ENCODE measurements at regions of chr20 and their contacts with region 1.

Region 1: DNA sequence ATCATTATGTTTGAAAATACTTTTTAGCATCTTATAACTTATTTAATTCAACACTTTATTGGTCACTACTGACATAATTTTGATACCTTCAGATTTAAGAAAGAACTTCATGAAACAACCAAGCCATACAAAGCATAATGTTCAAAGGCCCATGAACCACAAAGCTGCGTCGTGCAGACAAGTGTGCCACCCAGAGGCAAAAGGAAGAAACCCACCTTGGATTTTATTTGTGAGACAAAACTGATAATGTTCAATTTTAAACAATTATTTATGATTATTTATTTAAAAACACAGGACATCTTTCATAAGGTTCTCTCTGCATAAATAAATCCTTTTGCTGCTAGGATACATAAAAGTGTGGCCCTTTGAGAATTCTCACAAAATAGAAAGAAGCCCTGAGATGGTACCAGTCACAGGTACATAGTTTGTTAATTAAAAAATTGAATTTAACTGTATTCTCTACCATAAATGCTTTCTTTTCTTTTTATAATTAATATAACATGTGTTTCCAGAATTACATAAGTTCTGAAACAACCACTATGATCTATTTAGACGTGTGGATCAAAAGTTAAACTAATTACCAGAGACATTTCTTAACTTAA is 143.7 kb downstream of the RALGAPA2 start:
- DNase-seq: peak; percentile 47 to 53
- H3K4me3 ChIP-seq: no peak overlapping the region
- H3K4me1 ChIP-seq: no peaks in the 10 kb centered on the region
- H3K27me3 ChIP-seq: no peaks in the 10 kb centered on the region

Region 2: GRCh38 chr20:19915111-19915798 is 653.5 kb before region 1 on chr20:
- in situ Hi-C with region 1: no loop called
- DNase-seq: no peak
- H3K4me3 ChIP-seq: no peak overlapping the region
- H3K4me1 ChIP-seq: no peaks in the 10 kb centered on the region
- H3K27me3 ChIP-seq: no peaks in the 10 kb centered on the region

Region 3: DNA sequence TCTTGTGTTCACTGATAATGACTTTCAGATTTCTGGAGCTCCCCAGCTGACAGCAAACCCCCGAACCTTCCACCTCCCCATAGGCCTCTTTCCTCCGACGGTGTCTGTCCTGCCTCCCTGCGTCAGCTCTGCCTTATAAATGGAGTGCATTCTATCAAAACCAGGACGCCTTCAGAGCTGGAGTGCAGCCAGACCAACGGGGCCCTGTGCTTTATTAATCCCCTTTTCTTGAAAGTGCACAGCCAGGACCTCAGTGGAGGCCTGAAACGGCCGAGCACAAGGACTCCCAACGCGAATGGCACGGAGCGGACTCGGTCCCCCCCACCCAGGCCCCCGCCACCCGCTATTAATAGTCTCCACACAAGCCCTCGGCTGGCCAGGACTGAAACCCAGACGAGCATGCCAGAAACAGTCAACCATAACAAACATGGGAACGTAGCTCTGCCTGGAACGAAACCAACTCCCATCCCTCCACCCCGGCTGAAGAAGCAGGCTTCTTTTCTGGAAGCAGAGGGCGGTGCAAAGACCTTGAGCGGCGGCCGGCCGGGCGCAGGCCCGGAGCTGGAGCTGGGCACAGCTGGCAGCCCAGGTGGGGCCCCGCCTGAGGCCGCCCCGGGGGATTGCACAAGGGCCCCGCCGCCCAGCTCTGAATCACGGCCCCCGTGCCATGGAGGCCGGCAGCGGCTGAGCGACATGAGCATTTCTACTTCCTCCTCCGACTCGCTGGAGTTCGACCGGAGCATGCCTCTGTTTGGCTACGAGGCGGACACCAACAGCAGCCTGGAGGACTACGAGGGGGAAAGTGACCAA is 593.9 kb before region 1 on chr20:
- in situ Hi-C with region 1: no loop called
- DNase-seq: no peak
- H3K4me3 ChIP-seq: no peak overlapping the region
- H3K4me1 ChIP-seq: peaks cover 11% of the 10 kb centered on the region
- H3K27me3 ChIP-seq: no peaks in the 10 kb centered on the region

Region 4: GRCh38 chr20:20096421-20096820 is 472.3 kb before region 1 on chr20:
- in situ Hi-C with region 1: loop called (anchors 10 kb)
- DNase-seq: no peak
- H3K4me3 ChIP-seq: no peak overlapping the region
- H3K4me1 ChIP-seq: no peaks in the 10 kb centered on the region
- H3K27me3 ChIP-seq: no peaks in the 10 kb centered on the region

Region 5: GRCh38 chr20:20360464-20360863 is 208.2 kb before region 1 on chr20:
- in situ Hi-C with region 1: loop called (anchors 25 kb)
- DNase-seq: peak; percentile 64 to 66
- H3K4me3 ChIP-seq: no peak overlapping the region
- H3K4me1 ChIP-seq: peaks cover 2% of the 10 kb centered on the region; the same call in 1 of the 2 replicates
- H3K27me3 ChIP-seq: peaks cover 39% of the 10 kb centered on the region

Measured in HAP-1 (cell line).